ENCODE measurements at regions of chr6 and their contacts with region 1.

Region 1: GRCh38 chr6:154276810-154277628 is 79.6 kb downstream of the IPCEF1 start:
- DNase-seq: peak; percentile 50
- ATAC-seq: peak; percentile 85
- H3K4me3 ChIP-seq: no peak overlapping the region
- H3K27ac ChIP-seq: no peak overlapping the region
- H3K4me1 ChIP-seq: peaks cover 3% of the 10 kb centered on the region
- H3K27me3 ChIP-seq: no peaks in the 10 kb centered on the region
- CTCF ChIP-seq: peak; percentile 55
- POLR2A ChIP-seq: no peak
- RAD21 ChIP-seq: peak; percentile 54

Region 2: DNA sequence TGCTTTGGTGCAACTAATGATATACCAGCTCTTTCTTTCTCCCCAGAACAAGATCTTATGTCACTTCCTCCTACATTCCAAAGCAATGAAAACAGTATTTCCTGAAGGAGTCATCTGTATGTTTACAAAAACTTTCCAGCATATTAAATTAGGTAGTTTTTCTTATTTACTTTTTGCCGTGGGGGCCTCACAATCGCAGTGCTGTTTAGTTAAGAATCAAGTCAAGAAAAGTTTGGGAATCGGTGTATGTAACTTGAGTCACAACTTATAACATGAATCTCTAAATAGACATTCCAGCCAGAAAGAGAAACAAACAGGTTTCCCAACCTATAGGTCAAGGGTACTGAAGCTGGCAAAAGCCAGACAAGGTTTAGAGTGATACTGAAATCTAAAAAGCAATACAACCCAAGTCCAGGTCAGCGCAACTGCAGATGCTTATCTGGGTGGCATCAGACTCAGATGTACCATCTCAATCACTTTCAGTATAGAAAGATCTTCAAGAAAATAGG is 15.9 kb after region 1 on chr6:
- CTCF ChIA-PET with region 1: interaction called, 3 read pairs
- POLR2A ChIA-PET with region 1: interaction called, 11 read pairs
- dilution Hi-C with region 1: no loop called
- in situ Hi-C with region 1: no loop called
- intact Hi-C with region 1: no loop called
- DNase-seq: peak; percentile 92
- ATAC-seq: peak; percentile 84
- H3K4me3 ChIP-seq: no peak overlapping the region; the same call in 1 of the 2 replicates
- H3K27ac ChIP-seq: peak overlapping the region; percentile 83
- H3K4me1 ChIP-seq: peaks cover 12% of the 10 kb centered on the region
- H3K27me3 ChIP-seq: no peaks in the 10 kb centered on the region
- CTCF ChIP-seq: no peak
- POLR2A ChIP-seq: no peak
- RAD21 ChIP-seq: no peak

Region 3: DNA sequence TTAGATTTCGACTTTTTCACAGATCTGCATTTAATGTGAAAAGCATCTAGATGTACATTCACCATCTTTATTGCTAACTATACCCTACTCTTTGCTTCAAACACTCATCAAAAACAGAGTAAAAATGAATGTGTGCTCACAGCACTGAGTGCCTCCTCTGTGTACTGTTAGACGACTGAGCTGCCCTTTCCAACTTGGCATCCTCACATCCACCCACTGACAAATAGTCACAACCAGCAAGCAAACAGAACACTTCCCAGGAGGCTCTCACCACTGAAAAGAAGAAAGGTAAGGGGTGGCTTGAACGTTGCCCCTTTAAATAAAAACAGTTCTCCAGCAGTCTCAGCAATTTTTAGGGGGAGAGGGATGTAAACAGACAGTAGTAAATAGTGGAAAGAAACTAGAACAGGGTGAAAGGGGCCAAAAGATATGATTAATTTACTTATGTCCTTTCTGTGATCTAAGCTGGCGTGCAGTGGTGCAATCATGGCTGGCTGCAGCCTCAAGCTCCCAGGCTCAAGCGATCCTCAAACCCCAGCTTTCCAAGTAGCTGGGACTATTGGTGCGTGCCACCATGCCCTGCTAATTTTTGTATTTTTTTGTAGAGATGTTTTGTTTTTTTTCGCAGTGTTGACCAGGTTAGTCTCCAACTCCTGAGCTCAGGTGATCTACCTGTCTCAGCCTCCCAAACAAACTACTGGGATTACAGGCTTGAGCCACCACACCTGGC is 30.8 kb after region 1 on chr6:
- CTCF ChIA-PET with region 1: no interaction called
- POLR2A ChIA-PET with region 1: no interaction called
- dilution Hi-C with region 1: no loop called
- in situ Hi-C with region 1: no loop called
- intact Hi-C with region 1: no loop called
- DNase-seq: no peak
- ATAC-seq: no peak
- H3K4me3 ChIP-seq: no peak overlapping the region
- H3K27ac ChIP-seq: no peak overlapping the region
- H3K4me1 ChIP-seq: peaks cover 5% of the 10 kb centered on the region; the same call in 1 of the 2 replicates
- H3K27me3 ChIP-seq: no peaks in the 10 kb centered on the region
- CTCF ChIP-seq: no peak
- POLR2A ChIP-seq: no peak
- RAD21 ChIP-seq: no peak

Region 4: GRCh38 chr6:154403788-154404187 is 126.8 kb after region 1 on chr6:
- CTCF ChIA-PET with region 1: no interaction called
- POLR2A ChIA-PET with region 1: no interaction called
- dilution Hi-C with region 1: no loop called
- in situ Hi-C with region 1: no loop called
- intact Hi-C with region 1: loop called (anchors 5 kb)
- DNase-seq: peak; percentile 82
- ATAC-seq: peak; percentile 65
- H3K4me3 ChIP-seq: no peak overlapping the region
- H3K27ac ChIP-seq: peak overlapping the region; percentile 88
- H3K4me1 ChIP-seq: peaks cover 22% of the 10 kb centered on the region
- H3K27me3 ChIP-seq: no peaks in the 10 kb centered on the region
- CTCF ChIP-seq: no peak
- POLR2A ChIP-seq: no peak
- RAD21 ChIP-seq: no peak

Region 5: GRCh38 chr6:154494592-154495311 is 217.7 kb after region 1 on chr6:
- CTCF ChIA-PET with region 1: interaction called, 10 read pairs
- POLR2A ChIA-PET with region 1: no interaction called
- dilution Hi-C with region 1: no loop called
- in situ Hi-C with region 1: no loop called
- intact Hi-C with region 1: no loop called
- DNase-seq: no peak
- ATAC-seq: no peak
- H3K4me3 ChIP-seq: no peak overlapping the region
- H3K27ac ChIP-seq: no peak overlapping the region
- H3K4me1 ChIP-seq: peaks cover 4% of the 10 kb centered on the region
- H3K27me3 ChIP-seq: no peaks in the 10 kb centered on the region
- CTCF ChIP-seq: no peak
- POLR2A ChIP-seq: no peak
- RAD21 ChIP-seq: no peak

Region 6: DNA sequence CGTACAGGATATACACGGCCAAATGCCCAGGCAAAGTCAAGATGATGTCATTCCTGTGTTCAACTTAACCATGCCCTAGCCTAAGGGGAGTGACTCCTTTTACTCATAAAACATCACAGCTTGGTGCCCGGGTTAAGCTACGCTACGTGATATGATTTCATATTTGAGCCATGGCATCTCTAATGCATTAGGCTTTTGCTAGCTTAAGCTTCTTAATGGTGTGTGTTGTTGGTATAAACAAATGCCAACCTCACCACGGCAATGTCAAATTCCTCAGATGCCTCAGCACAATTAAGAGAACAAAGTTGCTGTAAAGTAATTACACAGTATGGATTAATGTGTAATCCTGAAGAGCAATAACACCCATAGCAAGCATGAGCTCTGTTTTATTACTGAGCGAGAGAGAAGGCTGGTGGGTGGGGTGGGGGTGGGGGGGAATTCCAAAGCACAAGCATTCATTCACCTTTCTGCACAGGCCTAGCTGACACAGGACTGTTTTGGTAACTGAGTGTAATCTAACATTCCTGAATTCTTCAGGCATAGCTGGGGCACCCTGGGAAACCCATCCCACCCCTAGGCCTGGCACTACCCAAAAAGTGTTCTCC is 278.2 kb after region 1 on chr6:
- CTCF ChIA-PET with region 1: no interaction called
- POLR2A ChIA-PET with region 1: no interaction called
- dilution Hi-C with region 1: no loop called
- in situ Hi-C with region 1: no loop called
- intact Hi-C with region 1: no loop called
- DNase-seq: peak; percentile 8
- ATAC-seq: peak; percentile 65
- H3K4me3 ChIP-seq: no peak overlapping the region
- H3K27ac ChIP-seq: no peak overlapping the region
- H3K4me1 ChIP-seq: 0 out of 2 replicates have a peak, but pooled peaks cover 2% of the 10 kb centered on the region
- H3K27me3 ChIP-seq: no peaks in the 10 kb centered on the region
- CTCF ChIP-seq: no peak
- POLR2A ChIP-seq: no peak
- RAD21 ChIP-seq: no peak